AG04450 (cell line): ENCODE measurements at regions of chr21 and their contacts with region 1.

Region 1: GRCh38 chr21:39518138-39518846 is 66.5 kb downstream of the SH3BGR start:
- DNase-seq: peak; percentile 16
- H3K4me3 ChIP-seq: no peak overlapping the region
- H3K27ac ChIP-seq: no peak overlapping the region
- H3K27me3 ChIP-seq: peaks cover 3% of the 10 kb centered on the region
- CTCF ChIP-seq: peak; percentile 89

Region 2: DNA sequence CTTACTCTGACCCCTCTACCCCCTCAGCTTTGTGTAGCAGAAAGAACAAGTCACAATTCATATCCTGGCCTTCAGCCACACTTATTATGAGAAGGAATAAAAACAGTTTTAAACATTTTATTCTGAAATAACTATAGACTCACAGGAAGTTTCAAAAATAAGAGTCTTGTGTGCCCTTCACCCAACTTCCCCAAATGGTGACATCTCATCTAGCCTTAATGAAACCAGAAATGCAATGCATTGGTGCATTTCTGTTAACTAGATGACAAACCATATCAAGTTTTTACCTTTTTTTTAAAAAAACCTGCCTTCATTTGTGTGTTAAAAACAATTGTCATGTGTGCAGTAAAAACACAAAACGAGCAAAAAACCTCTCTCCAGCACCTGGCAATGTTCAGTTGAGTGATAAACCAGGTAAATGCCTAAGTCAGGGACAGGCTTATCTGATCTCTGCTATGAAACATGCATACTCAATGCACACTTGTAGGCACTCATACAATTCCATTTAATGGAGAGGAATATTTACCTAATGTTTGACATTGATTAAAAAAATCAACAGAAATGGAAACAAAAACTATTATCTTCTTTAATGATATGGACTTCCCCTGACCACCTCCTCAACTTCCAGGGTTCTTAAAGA is 15.0 kb before region 1 on chr21:
- CTCF ChIA-PET with region 1: interaction called, 11 read pairs
- POLR2A ChIA-PET with region 1: no interaction called
- DNase-seq: no peak
- H3K4me3 ChIP-seq: no peak overlapping the region
- H3K27ac ChIP-seq: no peak overlapping the region
- H3K27me3 ChIP-seq: peaks cover 5% of the 10 kb centered on the region
- CTCF ChIP-seq: no peak

Region 3: DNA sequence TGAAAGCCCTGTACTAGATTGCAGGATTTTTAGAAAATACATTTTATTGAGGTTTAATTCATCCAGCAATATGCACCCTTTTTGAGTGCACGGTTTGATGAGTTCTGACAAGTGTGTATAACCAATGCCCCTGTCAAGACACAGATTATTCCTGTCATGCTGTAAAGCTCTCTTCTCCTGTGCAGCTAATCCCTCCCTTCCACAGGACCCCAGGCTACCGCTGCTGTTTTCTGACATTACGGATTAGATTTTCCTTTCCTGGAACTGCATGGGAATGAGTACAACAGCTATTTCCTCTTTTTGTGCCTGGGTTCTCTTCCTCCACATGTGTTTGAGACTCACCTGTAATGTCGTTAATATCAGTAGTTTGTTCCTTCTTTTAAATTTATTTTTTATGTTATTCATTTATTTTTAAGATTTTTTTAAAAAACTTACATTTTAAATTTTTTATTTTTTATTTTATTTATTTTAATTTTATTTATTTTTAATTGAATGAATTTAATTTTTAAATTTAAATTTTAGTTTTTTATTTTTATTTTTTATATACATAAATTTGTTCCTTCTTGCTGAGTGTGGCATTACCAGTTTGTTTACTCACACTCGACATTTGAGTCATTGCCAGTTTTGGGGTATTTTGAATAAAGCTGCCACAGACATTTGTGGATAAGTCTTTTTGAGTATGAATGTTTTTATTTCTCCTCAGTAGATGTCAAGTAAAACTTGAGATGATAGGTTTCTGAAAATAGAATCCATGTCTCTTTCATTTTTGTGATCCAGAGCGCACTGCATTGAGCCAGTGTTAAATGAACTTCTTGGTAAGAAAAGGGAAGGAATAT is 15.5 kb after region 1 on chr21:
- CTCF ChIA-PET with region 1: interaction called, 15 read pairs
- POLR2A ChIA-PET with region 1: no interaction called
- DNase-seq: no peak
- H3K4me3 ChIP-seq: no peak overlapping the region
- H3K27ac ChIP-seq: no peak overlapping the region
- H3K27me3 ChIP-seq: no peaks in the 10 kb centered on the region
- CTCF ChIP-seq: no peak

Region 4: GRCh38 chr21:39705849-39706248 is 187.6 kb after region 1 on chr21:
- CTCF ChIA-PET with region 1: interaction called, 54 read pairs
- POLR2A ChIA-PET with region 1: no interaction called
- DNase-seq: no peak
- H3K4me3 ChIP-seq: no peak overlapping the region
- H3K27ac ChIP-seq: no peak overlapping the region
- H3K27me3 ChIP-seq: no peaks in the 10 kb centered on the region
- CTCF ChIP-seq: peak; percentile 35; the same call in 1 of the 2 replicates

Region 5: GRCh38 chr21:39715804-39716397 is 197.6 kb after region 1 on chr21:
- CTCF ChIA-PET with region 1: interaction called, 160 read pairs
- POLR2A ChIA-PET with region 1: no interaction called
- DNase-seq: peak; percentile 8
- H3K4me3 ChIP-seq: no peak overlapping the region
- H3K27ac ChIP-seq: no peak overlapping the region
- H3K27me3 ChIP-seq: peaks cover 2% of the 10 kb centered on the region
- CTCF ChIP-seq: peak; percentile 63

Region 6: DNA sequence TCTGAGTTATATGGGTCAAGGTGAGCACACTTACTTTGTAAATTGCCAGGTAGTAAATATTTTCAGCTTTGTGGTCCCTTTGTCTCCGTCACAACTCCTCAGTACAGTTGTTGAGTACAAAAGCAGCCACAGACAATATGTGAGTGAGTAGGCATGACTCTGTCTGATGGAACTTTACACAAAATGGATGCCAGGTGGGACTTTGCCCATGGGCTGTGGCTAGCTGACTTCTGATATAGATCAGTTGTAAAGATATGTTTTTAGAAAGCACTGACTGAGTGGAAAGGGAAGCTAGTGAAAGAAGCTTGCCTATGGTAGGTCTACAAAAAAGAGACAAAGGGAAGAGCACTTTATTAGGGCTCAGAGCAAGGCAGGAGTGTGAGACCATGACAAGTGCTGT is 203.6 kb after region 1 on chr21:
- CTCF ChIA-PET with region 1: interaction called, 160 read pairs
- POLR2A ChIA-PET with region 1: no interaction called
- DNase-seq: no peak
- H3K4me3 ChIP-seq: no peak overlapping the region
- H3K27ac ChIP-seq: no peak overlapping the region
- H3K27me3 ChIP-seq: no peaks in the 10 kb centered on the region
- CTCF ChIP-seq: no peak